ENCODE measurements at regions of chr15 and their contacts with region 1.

Region 1: DNA sequence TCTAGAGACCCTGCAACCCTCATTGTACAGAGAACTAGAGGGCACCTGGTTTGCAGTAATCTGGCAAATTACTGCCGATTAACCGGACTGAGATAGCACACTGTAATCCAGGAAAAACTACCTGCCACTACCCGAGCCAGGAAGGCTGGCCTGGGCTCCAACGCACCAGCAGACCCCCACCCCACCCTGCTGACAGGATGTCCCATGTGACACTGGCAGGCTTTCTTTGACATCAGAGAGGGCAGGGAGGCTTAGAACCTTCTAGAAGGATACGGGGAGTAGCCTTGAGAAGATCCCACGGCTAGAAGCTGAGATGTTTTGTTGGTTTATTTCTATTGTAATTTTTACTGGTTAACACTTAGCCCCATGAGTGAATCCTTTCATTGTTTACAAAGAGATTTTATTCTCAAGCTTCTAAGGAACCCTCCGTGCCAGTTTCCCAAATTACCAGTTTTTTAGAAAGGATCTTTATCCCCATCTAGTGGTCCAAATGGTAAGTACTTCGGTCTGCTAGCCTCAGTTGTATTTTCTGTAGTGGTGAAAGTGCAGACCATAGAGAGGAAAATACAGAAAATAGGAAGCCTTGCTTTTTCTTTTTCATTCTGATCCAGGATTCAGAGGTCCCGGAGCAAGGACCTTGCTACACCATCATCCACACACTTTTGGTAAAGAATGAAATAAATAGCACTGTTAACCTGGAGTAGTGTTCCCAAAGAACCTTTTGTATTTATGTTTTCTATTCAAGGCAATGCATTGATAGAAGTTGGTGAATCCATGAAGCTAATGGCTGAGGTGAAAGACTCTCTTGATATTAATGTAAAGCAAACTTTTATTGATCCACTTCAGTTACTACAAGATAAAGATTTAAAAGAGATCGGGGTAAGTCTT is 81.9 kb upstream of the ADAMTSL3 start:
- DNase-seq: no peak
- H3K4me3 Mint-ChIP-seq: no peak overlapping the region
- H3K27ac Mint-ChIP-seq: no peak overlapping the region
- H3K4me1 Mint-ChIP-seq: no peaks in the 10 kb centered on the region
- H3K27me3 Mint-ChIP-seq: peaks cover 2% of the 10 kb centered on the region

Region 2: GRCh38 chr15:83475551-83475950 is 96.5 kb before region 1 on chr15:
- CTCF ChIA-PET with region 1: no interaction called
- POLR2A ChIA-PET with region 1: no interaction called
- DNase-seq: no peak
- H3K4me3 Mint-ChIP-seq: no peak overlapping the region
- H3K27ac Mint-ChIP-seq: no peak overlapping the region
- H3K4me1 Mint-ChIP-seq: no peaks in the 10 kb centered on the region
- H3K27me3 Mint-ChIP-seq: no peaks in the 10 kb centered on the region

Region 3: GRCh38 chr15:83559310-83559966 is 12.6 kb before region 1 on chr15:
- CTCF ChIA-PET with region 1: interaction called, 17 read pairs
- POLR2A ChIA-PET with region 1: no interaction called
- DNase-seq: peak; percentile 45
- H3K4me3 Mint-ChIP-seq: no peak overlapping the region
- H3K27ac Mint-ChIP-seq: no peak overlapping the region
- H3K4me1 Mint-ChIP-seq: no peaks in the 10 kb centered on the region
- H3K27me3 Mint-ChIP-seq: peaks cover 2% of the 10 kb centered on the region

Region 4: DNA sequence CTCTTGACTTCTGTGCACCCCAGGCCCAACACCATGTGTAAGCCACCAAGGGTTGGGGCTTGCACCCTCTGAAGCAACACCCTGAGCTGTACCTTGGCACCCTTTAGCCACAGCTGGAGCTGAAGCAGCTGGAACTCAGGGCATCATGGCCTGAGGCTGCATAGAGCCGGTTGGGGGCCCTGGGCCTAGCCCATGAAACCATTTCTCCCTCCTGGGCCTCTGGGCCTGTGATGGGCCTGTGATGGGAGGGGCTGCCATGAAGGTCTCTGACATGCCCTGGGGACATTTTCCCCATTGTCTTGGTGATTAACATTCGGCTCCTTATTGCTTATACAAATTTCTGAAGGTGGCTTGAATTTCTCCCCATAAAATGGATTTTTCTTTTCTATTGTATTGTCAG is 59.5 kb after region 1 on chr15:
- CTCF ChIA-PET with region 1: no interaction called
- POLR2A ChIA-PET with region 1: no interaction called
- DNase-seq: no peak
- H3K4me3 Mint-ChIP-seq: no peak overlapping the region
- H3K27ac Mint-ChIP-seq: no peak overlapping the region
- H3K4me1 Mint-ChIP-seq: no peaks in the 10 kb centered on the region
- H3K27me3 Mint-ChIP-seq: no peaks in the 10 kb centered on the region

Region 5: DNA sequence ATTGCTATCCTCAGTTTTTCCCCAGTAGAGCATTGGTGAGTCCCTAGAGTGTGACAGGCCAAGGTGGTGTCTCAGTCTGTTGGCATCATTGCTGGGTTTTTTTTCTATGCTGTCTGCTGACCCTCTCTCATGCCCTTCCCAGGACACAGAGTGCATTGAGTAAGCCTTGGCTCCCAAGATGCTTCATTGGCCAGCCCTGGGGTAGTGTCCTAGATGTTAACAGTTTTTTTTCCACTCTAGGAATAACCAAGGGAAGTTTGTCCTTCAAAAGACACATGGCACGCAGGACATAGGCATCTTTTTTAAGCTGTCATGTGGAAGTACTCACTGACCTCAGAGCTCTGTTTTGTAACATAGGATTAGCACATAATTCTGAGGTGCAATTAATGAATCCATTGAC is 101.3 kb after region 1 on chr15:
- CTCF ChIA-PET with region 1: no interaction called
- POLR2A ChIA-PET with region 1: no interaction called
- DNase-seq: no peak
- H3K4me3 Mint-ChIP-seq: no peak overlapping the region
- H3K27ac Mint-ChIP-seq: no peak overlapping the region
- H3K4me1 Mint-ChIP-seq: no peaks in the 10 kb centered on the region
- H3K27me3 Mint-ChIP-seq: no peaks in the 10 kb centered on the region

Measured in activated CD4-positive, alpha-beta memory T cell treated with anti-CD3 and anti-CD28 coated beads, Interleukin-2, amount 10 ng/mL, durations not matched to agents 7 days and 5 days (primary cell).